Activated CD8-positive, alpha-beta T cell treated with anti-CD3 and anti-CD28 coated beads for 36 hours (primary cell): ENCODE measurements at regions of chr12 and their contacts with region 1.

Region 1: DNA sequence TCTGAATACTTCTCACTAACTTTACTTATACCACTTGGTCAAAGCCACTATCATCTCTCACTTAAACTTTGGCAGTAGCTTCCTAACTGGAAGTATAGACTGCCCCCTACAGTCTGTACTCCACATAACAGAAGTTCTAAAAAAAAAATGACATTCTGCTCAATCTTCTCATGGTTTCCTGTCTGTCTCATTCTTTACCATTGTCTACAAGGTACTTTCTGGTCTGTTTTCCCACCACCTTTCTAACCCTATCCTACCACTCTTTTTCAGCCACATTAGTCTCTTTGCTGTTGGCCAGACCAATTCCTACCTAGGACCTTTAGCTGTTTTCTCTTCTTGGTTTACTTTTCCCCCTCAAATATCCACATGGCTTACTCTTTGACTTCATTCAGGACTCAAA is 14.7 kb downstream of the CPSF6 start:
- DNase-seq: no peak
- ATAC-seq: peak; percentile 93
- H3K4me3 Mint-ChIP-seq: no peak overlapping the region
- H3K27ac Mint-ChIP-seq: peak overlapping the region; percentile 44
- H3K4me1 Mint-ChIP-seq: peaks cover 39% of the 10 kb centered on the region
- H3K27me3 Mint-ChIP-seq: no peaks in the 10 kb centered on the region
- CTCF ChIP-seq: peak; percentile 55

Region 2: GRCh38 chr12:69123311-69123710 is 130.7 kb before region 1 on chr12:
- CTCF ChIA-PET with region 1: no interaction called
- POLR2A ChIA-PET with region 1: no interaction called
- intact Hi-C with region 1: no loop called
- DNase-seq: no peak
- ATAC-seq: no peak
- H3K4me3 Mint-ChIP-seq: no peak overlapping the region
- H3K27ac Mint-ChIP-seq: no peak overlapping the region
- H3K4me1 Mint-ChIP-seq: no peaks in the 10 kb centered on the region
- H3K27me3 Mint-ChIP-seq: peaks cover 4% of the 10 kb centered on the region
- CTCF ChIP-seq: no peak

Region 3: GRCh38 chr12:69240631-69240995 is 13.4 kb before region 1 on chr12:
- CTCF ChIA-PET with region 1: interaction called, 22 read pairs
- POLR2A ChIA-PET with region 1: interaction called, 8 read pairs
- intact Hi-C with region 1: no loop called
- DNase-seq: peak; percentile 60
- ATAC-seq: peak; percentile 18
- H3K4me3 Mint-ChIP-seq: peak overlapping the region; percentile 99
- H3K27ac Mint-ChIP-seq: peak overlapping the region; percentile 98
- H3K4me1 Mint-ChIP-seq: peaks cover 51% of the 10 kb centered on the region
- H3K27me3 Mint-ChIP-seq: no peaks in the 10 kb centered on the region
- CTCF ChIP-seq: no peak

Region 4: GRCh38 chr12:69266036-69266635 is 12.1 kb after region 1 on chr12:
- CTCF ChIA-PET with region 1: interaction called, 18 read pairs
- POLR2A ChIA-PET with region 1: no interaction called
- intact Hi-C with region 1: no loop called
- DNase-seq: no peak
- ATAC-seq: no peak
- H3K4me3 Mint-ChIP-seq: no peak overlapping the region
- H3K27ac Mint-ChIP-seq: no peak overlapping the region
- H3K4me1 Mint-ChIP-seq: peaks cover 16% of the 10 kb centered on the region
- H3K27me3 Mint-ChIP-seq: no peaks in the 10 kb centered on the region
- CTCF ChIP-seq: no peak